Posterior vena cava (tissue), 2 donors: ENCODE measurements at regions of chr22 and their contacts with region 1.

Region 1: GRCh38 chr22:39101226-39101625 is 4.2 kb downstream of the APOBEC3H start:
- DNase-seq: no peak

Region 2: DNA sequence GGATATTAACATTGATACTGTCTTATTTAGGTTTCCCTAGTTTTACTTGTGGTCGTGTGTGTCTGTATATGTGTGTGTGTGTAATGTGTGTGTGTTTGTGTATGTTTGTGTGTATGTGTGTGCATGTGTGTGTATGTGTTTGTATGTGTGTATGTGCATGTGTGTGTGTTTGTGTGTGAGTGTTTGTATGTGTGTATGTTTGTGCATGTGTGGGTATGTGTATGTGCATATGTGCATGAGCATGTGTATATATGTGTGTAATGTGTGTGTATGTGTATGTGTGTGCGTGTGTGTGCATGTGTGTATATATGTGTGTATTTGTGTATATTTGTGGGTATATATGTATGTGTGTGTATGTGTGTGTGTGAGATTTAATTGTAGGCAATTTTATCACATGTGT is 290.0 kb before region 1 on chr22:
- intact Hi-C with region 1: loop called in 1 of 2 experiments (anchors 5 kb)
- DNase-seq: no peak

Region 3: GRCh38 chr22:39073941-39074340 is 27.3 kb before region 1 on chr22:
- intact Hi-C with region 1: loop called in 1 of 2 experiments (anchors 1 kb)
- DNase-seq: no peak